PC-3 (cell line): ENCODE measurements at regions of chr6 and their contacts with region 1.

Region 1: GRCh38 chr6:134161036-134161435 is 108.6 kb upstream of the SLC2A12 start:
- DNase-seq: peak; percentile 52
- ATAC-seq: peak; percentile 63; the same call in 1 of the 2 replicates
- H3K4me3 ChIP-seq: no peak overlapping the region
- H3K27ac ChIP-seq: no peak overlapping the region
- H3K4me1 ChIP-seq: peaks cover 11% of the 10 kb centered on the region
- H3K27me3 ChIP-seq: no peaks in the 10 kb centered on the region
- CTCF ChIP-seq: no peak

Region 2: DNA sequence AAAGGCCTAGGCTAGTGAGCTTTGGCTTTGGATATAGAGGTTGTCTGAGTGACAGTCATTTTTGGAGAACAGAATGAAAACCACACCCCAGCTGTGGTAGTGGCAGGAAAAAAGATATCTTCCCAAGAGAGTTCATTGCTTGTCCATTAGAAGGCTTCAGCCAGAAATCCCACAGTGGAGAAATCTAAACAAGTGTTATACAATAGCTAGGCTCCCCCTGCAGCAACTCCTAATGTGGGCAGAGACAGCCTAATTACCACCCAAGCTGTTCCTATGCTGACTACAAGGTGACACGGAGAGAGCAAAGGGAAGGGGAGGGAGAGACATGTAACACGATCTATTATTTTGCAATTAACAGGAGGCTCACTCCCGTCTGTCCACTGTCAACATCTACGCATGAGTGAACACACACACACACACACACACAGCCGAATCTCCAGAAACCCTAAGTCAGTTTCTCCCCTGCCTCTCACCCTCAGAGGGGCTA is 419.6 kb before region 1 on chr6:
- CTCF ChIA-PET with region 1: no interaction called
- POLR2A ChIA-PET with region 1: no interaction called
- intact Hi-C with region 1: no loop called
- DNase-seq: no peak
- ATAC-seq: peak; percentile 33; the same call in 1 of the 2 replicates
- H3K4me3 ChIP-seq: no peak overlapping the region
- H3K27ac ChIP-seq: no peak overlapping the region
- H3K4me1 ChIP-seq: peaks cover 27% of the 10 kb centered on the region
- H3K27me3 ChIP-seq: no peaks in the 10 kb centered on the region
- CTCF ChIP-seq: no peak

Region 3: GRCh38 chr6:134123666-134124208 is 37.3 kb before region 1 on chr6:
- CTCF ChIA-PET with region 1: no interaction called
- POLR2A ChIA-PET with region 1: no interaction called
- intact Hi-C with region 1: loop called (anchors 5 kb)
- DNase-seq: peak; percentile 74
- ATAC-seq: peak; percentile 66
- H3K4me3 ChIP-seq: no peak overlapping the region
- H3K27ac ChIP-seq: no peak overlapping the region
- H3K4me1 ChIP-seq: no peaks in the 10 kb centered on the region
- H3K27me3 ChIP-seq: no peaks in the 10 kb centered on the region
- CTCF ChIP-seq: peak; percentile 70

Region 4: GRCh38 chr6:134640975-134641429 is 480.0 kb after region 1 on chr6:
- CTCF ChIA-PET with region 1: no interaction called
- POLR2A ChIA-PET with region 1: no interaction called
- intact Hi-C with region 1: loop called (anchors 5 kb)
- DNase-seq: peak; percentile 86
- ATAC-seq: peak; percentile 70
- H3K4me3 ChIP-seq: no peak overlapping the region
- H3K27ac ChIP-seq: no peak overlapping the region
- H3K4me1 ChIP-seq: peaks cover 22% of the 10 kb centered on the region
- H3K27me3 ChIP-seq: no peaks in the 10 kb centered on the region
- CTCF ChIP-seq: peak; percentile 86

Region 5: GRCh38 chr6:134822920-134823709 is 662.1 kb after region 1 on chr6:
- CTCF ChIA-PET with region 1: no interaction called
- POLR2A ChIA-PET with region 1: no interaction called
- intact Hi-C with region 1: loop called (anchors 2 kb)
- DNase-seq: peak; percentile 88
- ATAC-seq: peak; percentile 95
- H3K4me3 ChIP-seq: no peak overlapping the region
- H3K27ac ChIP-seq: no peak overlapping the region
- H3K4me1 ChIP-seq: no peaks in the 10 kb centered on the region; the same call in 1 of the 2 replicates
- H3K27me3 ChIP-seq: no peaks in the 10 kb centered on the region
- CTCF ChIP-seq: peak; percentile 79

Region 6: DNA sequence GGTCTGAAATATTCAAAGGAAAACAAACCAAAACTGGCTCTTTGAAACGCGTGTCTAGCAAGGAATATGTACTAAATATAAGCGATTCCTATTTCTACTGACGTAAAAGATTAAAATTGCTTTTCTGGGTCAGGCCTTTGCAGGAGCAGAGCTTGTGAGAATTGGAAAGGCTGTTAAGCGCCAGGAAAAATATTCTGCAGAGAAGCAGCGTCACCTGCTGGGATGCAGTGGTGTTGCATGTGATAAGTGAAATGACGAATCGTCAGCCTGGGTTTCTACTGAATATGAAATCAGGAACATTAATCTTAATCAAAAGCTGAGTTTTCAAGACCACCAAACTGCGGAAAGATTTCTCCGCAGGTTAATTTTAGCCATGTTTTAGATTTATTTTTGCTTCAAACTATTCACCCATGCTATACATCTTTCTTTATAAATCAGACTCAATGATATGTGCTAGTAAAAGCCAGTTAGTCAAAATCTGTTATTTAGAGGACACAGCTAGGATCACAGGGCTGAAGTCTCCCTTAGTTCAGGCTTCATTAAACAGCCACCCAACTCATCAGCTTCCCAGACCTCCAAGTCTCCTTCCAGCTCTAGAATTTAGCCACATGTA is 721.5 kb after region 1 on chr6:
- CTCF ChIA-PET with region 1: no interaction called
- POLR2A ChIA-PET with region 1: no interaction called
- intact Hi-C with region 1: loop called (anchors 1 kb)
- DNase-seq: peak; percentile 70
- ATAC-seq: peak; percentile 56
- H3K4me3 ChIP-seq: no peak overlapping the region
- H3K27ac ChIP-seq: no peak overlapping the region
- H3K4me1 ChIP-seq: no peaks in the 10 kb centered on the region
- H3K27me3 ChIP-seq: no peaks in the 10 kb centered on the region
- CTCF ChIP-seq: peak; percentile 91

Region 7: DNA sequence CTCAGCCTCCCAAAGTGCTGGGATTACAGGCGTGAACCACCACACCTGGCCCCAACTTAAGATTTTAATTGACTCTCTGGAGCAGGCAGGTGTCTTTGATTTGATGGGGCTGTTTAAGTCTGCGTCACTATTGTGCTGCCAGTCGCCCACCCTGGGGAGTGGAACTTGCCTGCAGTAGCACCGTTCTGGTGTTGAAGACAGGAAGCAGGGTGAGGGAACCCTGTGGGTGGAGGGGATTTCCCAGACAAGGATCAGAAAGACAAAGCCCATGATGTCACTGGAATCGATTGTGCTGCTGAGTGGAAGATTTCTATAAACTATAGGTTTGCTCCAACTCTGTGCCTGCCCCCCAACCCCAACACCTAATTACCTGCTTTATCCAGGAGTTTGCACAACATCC is 777.9 kb after region 1 on chr6:
- CTCF ChIA-PET with region 1: no interaction called
- POLR2A ChIA-PET with region 1: no interaction called
- intact Hi-C with region 1: loop called (anchors 1 kb)
- DNase-seq: no peak
- ATAC-seq: no peak
- H3K4me3 ChIP-seq: no peak overlapping the region
- H3K27ac ChIP-seq: no peak overlapping the region
- H3K4me1 ChIP-seq: peaks cover 8% of the 10 kb centered on the region
- H3K27me3 ChIP-seq: no peaks in the 10 kb centered on the region
- CTCF ChIP-seq: no peak